ENCODE measurements at regions of chr5 and their contacts with region 1.

Region 1: GRCh38 chr5:57524298-57525060 is 41.9 kb upstream of the ACTBL2 start:
- DNase-seq: no peak
- H3K4me3 ChIP-seq: no peak overlapping the region
- H3K27ac ChIP-seq: no peak overlapping the region
- H3K4me1 ChIP-seq: no peaks in the 10 kb centered on the region
- H3K27me3 ChIP-seq: no peaks in the 10 kb centered on the region
- CTCF ChIP-seq: no peak
- EP300 ChIP-seq: no peak
- POLR2A ChIP-seq: no peak

Region 2: GRCh38 chr5:57577432-57578175 is 53.1 kb after region 1 on chr5:
- in situ Hi-C with region 1: no loop called
- intact Hi-C with region 1: no loop called
- DNase-seq: no peak
- H3K4me3 ChIP-seq: no peak overlapping the region
- H3K27ac ChIP-seq: no peak overlapping the region
- H3K4me1 ChIP-seq: no peaks in the 10 kb centered on the region
- H3K27me3 ChIP-seq: no peaks in the 10 kb centered on the region
- CTCF ChIP-seq: no peak
- EP300 ChIP-seq: no peak
- POLR2A ChIP-seq: no peak

Region 3: GRCh38 chr5:57601996-57602395 is 77.5 kb after region 1 on chr5:
- in situ Hi-C with region 1: no loop called
- intact Hi-C with region 1: loop called (anchors 2 kb)
- DNase-seq: no peak
- H3K4me3 ChIP-seq: no peak overlapping the region
- H3K27ac ChIP-seq: no peak overlapping the region
- H3K4me1 ChIP-seq: no peaks in the 10 kb centered on the region
- H3K27me3 ChIP-seq: no peaks in the 10 kb centered on the region
- CTCF ChIP-seq: no peak
- EP300 ChIP-seq: no peak
- POLR2A ChIP-seq: no peak